GM18951 (cell line): ENCODE measurements at regions of chr1 and their contacts with region 1.

Region 1: GRCh38 chr1:167442124-167442848 is 76.0 kb downstream of the CD247 start:
- POLR2A ChIP-seq: no peak

Region 2: GRCh38 chr1:167066333-167067122 is 375.8 kb before region 1 on chr1:
- in situ Hi-C with region 1: loop called (anchors 10 kb)
- POLR2A ChIP-seq: no peak

Region 3: DNA sequence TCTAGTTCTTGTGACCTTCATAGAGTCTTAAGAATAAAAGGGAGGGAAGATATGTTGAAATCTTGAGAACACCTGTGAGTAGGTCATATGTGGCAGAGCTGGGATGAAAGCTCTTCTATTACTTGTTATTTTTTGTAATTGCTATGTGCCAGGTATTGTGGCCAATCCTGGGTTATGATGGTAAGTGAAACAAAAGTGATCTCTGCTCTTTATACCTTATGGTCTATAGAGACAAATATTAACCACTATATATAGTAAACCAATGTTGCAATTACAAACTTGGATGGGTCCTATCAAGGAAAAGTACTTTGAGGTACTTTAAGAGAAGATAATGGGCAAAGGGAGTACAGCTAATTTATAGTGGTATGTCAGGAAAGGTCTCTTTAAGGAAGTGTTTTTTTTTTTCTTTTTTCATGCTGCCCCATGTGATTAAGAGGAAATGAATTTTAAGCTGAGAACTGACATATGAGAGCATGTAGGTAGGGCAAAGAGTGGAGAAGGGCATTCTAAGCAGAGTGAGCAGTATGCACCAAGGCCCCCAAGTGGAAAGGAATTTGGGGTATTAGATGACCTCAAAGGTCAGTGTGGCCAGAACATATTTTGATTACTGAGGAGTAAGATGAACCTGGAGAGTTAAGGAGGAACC is 178.3 kb before region 1 on chr1:
- in situ Hi-C with region 1: loop called (anchors 10 kb)
- POLR2A ChIP-seq: no peak